CD4-positive, alpha-beta T cell (primary cell): ENCODE measurements at regions of chr5 and their contacts with region 1.

Region 1: GRCh38 chr5:101045689-101046088 is 142.6 kb upstream of the ST8SIA4 start:
- DNase-seq: peak in 3 of 14 experiments; percentile 41 to 42 (median 41)
- ATAC-seq: no peak
- H3K4me3 ChIP-seq: no peak overlapping the region
- H3K4me3 Mint-ChIP-seq: no peak overlapping the region
- H3K27ac ChIP-seq: no peak overlapping the region
- H3K27ac Mint-ChIP-seq: no peak overlapping the region
- H3K4me1 ChIP-seq: no peaks in the 10 kb centered on the region
- H3K4me1 Mint-ChIP-seq: peaks cover 9% of the 10 kb centered on the region
- H3K27me3 ChIP-seq: no peaks in the 10 kb centered on the region
- H3K27me3 Mint-ChIP-seq: no peaks in the 10 kb centered on the region
- CTCF ChIP-seq: peak; percentile 52

Region 2: DNA sequence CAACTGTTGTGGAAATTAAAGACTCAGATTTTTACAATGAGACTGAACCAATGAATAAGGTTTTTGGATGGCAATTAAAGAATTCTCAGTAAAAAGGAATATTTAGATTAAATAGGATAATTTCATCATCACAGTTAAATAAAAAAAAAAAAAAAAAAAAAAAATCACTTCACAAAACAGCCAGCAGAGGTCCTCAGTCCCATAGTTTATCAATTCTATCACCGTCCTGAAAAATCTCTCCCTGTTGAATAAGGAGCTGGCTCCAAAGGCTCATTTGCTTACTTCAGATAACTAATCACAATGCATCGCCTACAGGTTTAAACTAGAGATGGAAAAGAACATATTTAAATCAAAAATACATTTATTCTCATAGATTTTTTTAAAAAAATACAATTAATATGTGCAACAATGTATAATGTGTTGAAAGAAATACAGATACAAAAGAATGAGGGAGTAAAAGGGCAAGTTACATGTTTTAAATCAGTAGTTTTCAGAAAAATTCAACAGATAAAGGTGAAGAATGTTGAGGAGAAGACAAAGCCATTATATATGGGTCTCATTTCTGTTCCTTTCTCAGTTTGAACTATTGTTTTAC is 1941.1 kb before region 1 on chr5:
- CTCF ChIA-PET with region 1: no interaction called
- POLR2A ChIA-PET with region 1: no interaction called
- intact Hi-C with region 1: loop called in 1 of 2 experiments (anchors 5 kb)
- DNase-seq: peak in 3 of 14 experiments; percentile 14 to 54 (median 47)
- ATAC-seq: no peak
- H3K4me3 ChIP-seq: no peak overlapping the region
- H3K4me3 Mint-ChIP-seq: no peak overlapping the region
- H3K27ac ChIP-seq: no peak overlapping the region
- H3K27ac Mint-ChIP-seq: no peak overlapping the region
- H3K4me1 ChIP-seq: no peaks in the 10 kb centered on the region
- H3K4me1 Mint-ChIP-seq: no peaks in the 10 kb centered on the region
- H3K27me3 ChIP-seq: no peaks in the 10 kb centered on the region
- H3K27me3 Mint-ChIP-seq: peaks cover 14% of the 10 kb centered on the region
- CTCF ChIP-seq: peak; percentile 83

Region 3: GRCh38 chr5:100430268-100431195 is 615.2 kb before region 1 on chr5:
- CTCF ChIA-PET with region 1: no interaction called
- POLR2A ChIA-PET with region 1: no interaction called
- intact Hi-C with region 1: loop called (anchors 5 to 10 kb)
- DNase-seq: peak in 13 of 14 experiments; percentile 9 to 55 (median 25)
- ATAC-seq: no peak
- H3K4me3 ChIP-seq: no peak overlapping the region
- H3K4me3 Mint-ChIP-seq: no peak overlapping the region
- H3K27ac ChIP-seq: no peak overlapping the region
- H3K27ac Mint-ChIP-seq: no peak overlapping the region
- H3K4me1 ChIP-seq: no peaks in the 10 kb centered on the region
- H3K4me1 Mint-ChIP-seq: no peaks in the 10 kb centered on the region
- H3K27me3 ChIP-seq: no peaks in the 10 kb centered on the region
- H3K27me3 Mint-ChIP-seq: peaks cover 7% of the 10 kb centered on the region
- CTCF ChIP-seq: peak; percentile 86

Region 4: GRCh38 chr5:100469767-100470166 is 575.9 kb before region 1 on chr5:
- CTCF ChIA-PET with region 1: no interaction called
- POLR2A ChIA-PET with region 1: no interaction called
- intact Hi-C with region 1: loop called in 1 of 2 experiments (anchors 5 kb)
- DNase-seq: no peak
- ATAC-seq: no peak
- H3K4me3 ChIP-seq: no peak overlapping the region
- H3K4me3 Mint-ChIP-seq: no peak overlapping the region
- H3K27ac ChIP-seq: no peak overlapping the region
- H3K27ac Mint-ChIP-seq: no peak overlapping the region
- H3K4me1 ChIP-seq: no peaks in the 10 kb centered on the region
- H3K4me1 Mint-ChIP-seq: no peaks in the 10 kb centered on the region
- H3K27me3 ChIP-seq: peaks cover 0 to 3% of the 10 kb centered on the region in 2 experiments
- H3K27me3 Mint-ChIP-seq: no peaks in the 10 kb centered on the region
- CTCF ChIP-seq: no peak

Region 5: GRCh38 chr5:100623719-100624118 is 422.0 kb before region 1 on chr5:
- CTCF ChIA-PET with region 1: no interaction called
- POLR2A ChIA-PET with region 1: no interaction called
- intact Hi-C with region 1: loop called (anchors 1 to 5 kb)
- DNase-seq: peak in 3 of 14 experiments; percentile 52 to 57 (median 56)
- ATAC-seq: no peak
- H3K4me3 ChIP-seq: no peak overlapping the region
- H3K4me3 Mint-ChIP-seq: no peak overlapping the region
- H3K27ac ChIP-seq: no peak overlapping the region
- H3K27ac Mint-ChIP-seq: no peak overlapping the region
- H3K4me1 ChIP-seq: no peaks in the 10 kb centered on the region
- H3K4me1 Mint-ChIP-seq: no peaks in the 10 kb centered on the region
- H3K27me3 ChIP-seq: no peaks in the 10 kb centered on the region
- H3K27me3 Mint-ChIP-seq: no peaks in the 10 kb centered on the region
- CTCF ChIP-seq: peak; percentile 67

Region 6: GRCh38 chr5:100803397-100803796 is 242.3 kb before region 1 on chr5:
- CTCF ChIA-PET with region 1: no interaction called
- POLR2A ChIA-PET with region 1: no interaction called
- intact Hi-C with region 1: no loop called
- DNase-seq: no peak
- ATAC-seq: no peak
- H3K4me3 ChIP-seq: no peak overlapping the region
- H3K4me3 Mint-ChIP-seq: no peak overlapping the region
- H3K27ac ChIP-seq: no peak overlapping the region
- H3K27ac Mint-ChIP-seq: no peak overlapping the region
- H3K4me1 ChIP-seq: no peaks in the 10 kb centered on the region
- H3K4me1 Mint-ChIP-seq: no peaks in the 10 kb centered on the region
- H3K27me3 ChIP-seq: no peaks in the 10 kb centered on the region
- H3K27me3 Mint-ChIP-seq: no peaks in the 10 kb centered on the region
- CTCF ChIP-seq: no peak